IMR-90 (cell line): ENCODE measurements at regions of chr17 and their contacts with region 1.

Region 1: GRCh38 chr17:82230627-82231311 is 1.9 kb downstream of the SLC16A3 start:
- DNase-seq: peak; percentile 81
- ATAC-seq: peak; percentile 66
- H3K4me3 ChIP-seq: peak overlapping the region; percentile 98
- H3K27ac ChIP-seq: peak overlapping the region; percentile 91
- H3K4me1 ChIP-seq: peaks cover 34% of the 10 kb centered on the region
- H3K27me3 ChIP-seq: no peaks in the 10 kb centered on the region
- CTCF ChIP-seq: peak; percentile 45
- POLR2A ChIP-seq: no peak; the same call in 1 of the 2 replicates
- RAD21 ChIP-seq: peak; percentile 27; the same call in 1 of the 2 replicates

Region 2: DNA sequence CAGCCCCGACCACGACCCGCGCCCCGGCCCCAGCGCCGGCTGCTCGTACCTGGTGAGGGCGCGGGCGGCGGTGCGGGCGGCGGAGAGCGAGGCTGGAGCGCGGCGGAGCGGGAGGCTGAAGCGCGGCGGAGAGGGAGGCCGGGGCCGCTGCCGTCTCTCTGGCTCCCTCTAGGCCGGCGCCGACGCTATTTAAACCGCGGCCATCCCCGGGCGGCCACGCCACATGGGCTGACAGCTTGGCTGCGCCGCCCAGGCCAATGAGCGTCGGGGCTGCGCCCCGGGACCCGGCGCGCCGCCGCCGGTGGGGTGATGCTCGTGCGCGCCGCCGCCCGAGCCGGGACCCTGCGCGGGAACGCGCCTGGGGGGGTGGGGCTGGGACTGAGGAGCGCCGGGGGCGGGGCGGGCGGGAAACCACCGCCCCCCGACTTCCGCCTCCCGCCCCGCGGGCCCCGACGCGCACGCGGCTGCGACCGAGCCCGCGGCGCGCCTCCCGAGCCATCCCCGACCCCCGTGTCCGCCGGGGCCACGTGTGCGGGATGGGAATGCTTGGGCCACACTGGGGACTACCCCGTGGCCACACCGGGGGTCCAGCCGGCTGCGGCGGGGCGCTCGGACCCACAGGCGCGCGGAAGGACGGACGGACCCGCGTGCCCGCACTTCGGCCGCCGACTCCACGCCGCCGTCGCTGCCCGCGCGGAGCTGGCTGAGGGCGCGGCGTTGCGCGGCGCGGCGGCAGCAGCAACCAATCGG is 132.5 kb before region 1 on chr17 and contains the start of gene FASN:
- CTCF ChIA-PET with region 1: no interaction called
- POLR2A ChIA-PET with region 1: no interaction called
- dilution Hi-C with region 1: no loop called
- in situ Hi-C with region 1: no loop called
- intact Hi-C with region 1: no loop called
- DNase-seq: peak; percentile 93
- ATAC-seq: peak; percentile 85
- H3K4me3 ChIP-seq: peak within 1 kb of the TSS; percentile 72
- H3K27ac ChIP-seq: peak within 1 kb of the TSS; percentile 94
- H3K4me1 ChIP-seq: peaks cover 13% of the 10 kb centered on the region
- H3K27me3 ChIP-seq: no peaks in the 10 kb centered on the region
- CTCF ChIP-seq: peak; percentile 66
- POLR2A ChIP-seq: peak; percentile 97
- RAD21 ChIP-seq: peak; percentile 15; the same call in 1 of the 2 replicates
- total RNA-seq, gene FASN: 12.4 and 15.3 TPM in 2 replicates

Region 3: GRCh38 chr17:82205719-82206508 is 24.9 kb before region 1 on chr17:
- CTCF ChIA-PET with region 1: interaction called, 3 read pairs
- POLR2A ChIA-PET with region 1: interaction called, 3 read pairs
- dilution Hi-C with region 1: no loop called
- in situ Hi-C with region 1: no loop called
- intact Hi-C with region 1: loop called (anchors 1 kb)
- DNase-seq: peak; percentile 84
- ATAC-seq: peak; percentile 91
- H3K4me3 ChIP-seq: no peak overlapping the region
- H3K27ac ChIP-seq: peak overlapping the region; percentile 12
- H3K4me1 ChIP-seq: peaks cover 11% of the 10 kb centered on the region
- H3K27me3 ChIP-seq: no peaks in the 10 kb centered on the region
- CTCF ChIP-seq: peak; percentile 82
- POLR2A ChIP-seq: no peak
- RAD21 ChIP-seq: peak; percentile 76

Region 4: DNA sequence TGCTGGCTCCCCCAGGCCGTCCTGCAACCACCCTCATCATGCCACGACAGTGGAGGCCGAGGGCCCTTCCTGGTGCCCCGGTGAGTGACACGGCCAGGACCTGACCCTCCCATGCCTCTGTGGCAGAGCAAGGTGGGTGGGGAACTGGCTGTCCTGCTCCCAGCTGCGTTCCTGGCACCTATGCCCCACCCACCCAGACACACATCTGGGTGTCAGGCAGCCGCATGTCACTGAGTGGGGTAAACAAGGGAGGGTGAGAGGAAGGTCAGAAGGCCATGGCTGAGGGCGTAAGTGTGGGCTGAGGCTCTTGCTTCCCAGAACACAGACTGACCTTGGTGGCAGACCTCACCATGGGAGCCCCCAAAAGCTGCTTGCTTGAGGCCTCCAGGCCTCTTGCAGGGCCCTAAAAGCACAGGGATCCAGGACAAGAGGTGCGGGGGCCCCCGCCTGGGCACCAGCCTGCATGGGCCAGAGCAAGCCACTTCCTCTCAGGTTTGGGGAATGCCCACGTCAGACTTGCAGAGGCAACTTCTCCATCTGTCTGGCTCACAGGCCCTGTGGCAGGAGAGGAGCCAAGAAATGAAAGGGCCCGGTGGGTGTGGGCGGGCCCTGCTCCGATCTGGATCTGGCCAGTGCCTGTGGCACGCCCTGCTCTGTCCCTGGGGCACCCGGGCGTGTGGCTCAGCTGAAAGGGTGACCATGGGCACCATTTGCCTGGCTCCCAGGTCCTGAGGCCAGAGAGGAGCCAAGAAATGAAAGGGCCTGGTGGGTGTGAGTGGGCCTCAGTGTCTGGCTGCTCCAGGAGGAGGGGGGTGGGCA is 14.3 kb before region 1 on chr17:
- CTCF ChIA-PET with region 1: no interaction called
- POLR2A ChIA-PET with region 1: interaction called, 5 read pairs
- dilution Hi-C with region 1: no loop called
- in situ Hi-C with region 1: no loop called
- intact Hi-C with region 1: loop called (anchors 2 kb)
- DNase-seq: peak; percentile 81
- ATAC-seq: peak; percentile 27
- H3K4me3 ChIP-seq: no peak overlapping the region
- H3K27ac ChIP-seq: peak overlapping the region; percentile 100
- H3K4me1 ChIP-seq: peaks cover 47% of the 10 kb centered on the region
- H3K27me3 ChIP-seq: no peaks in the 10 kb centered on the region
- CTCF ChIP-seq: no peak
- POLR2A ChIP-seq: no peak
- RAD21 ChIP-seq: no peak

Region 5: GRCh38 chr17:82716203-82717010 is 485.6 kb after region 1 on chr17 and contains the start of gene FN3KRP:
- CTCF ChIA-PET with region 1: no interaction called
- POLR2A ChIA-PET with region 1: interaction called, 10 read pairs
- dilution Hi-C with region 1: no loop called
- in situ Hi-C with region 1: no loop called
- intact Hi-C with region 1: no loop called
- DNase-seq: peak; percentile 83
- ATAC-seq: peak; percentile 96
- H3K4me3 ChIP-seq: peak within 1 kb of the TSS; percentile 94
- H3K27ac ChIP-seq: peak within 1 kb of the TSS; percentile 87
- H3K4me1 ChIP-seq: peaks cover 7% of the 10 kb centered on the region
- H3K27me3 ChIP-seq: peaks cover 5% of the 10 kb centered on the region; the same call in 1 of the 2 replicates
- CTCF ChIP-seq: no peak
- POLR2A ChIP-seq: peak; percentile 70
- RAD21 ChIP-seq: no peak
- total RNA-seq, gene FN3KRP: 18.6 and 20.6 TPM in 2 replicates